Tibial artery (tissue), 4 donors: ENCODE measurements at regions of chr6 and their contacts with region 1.

Region 1: GRCh38 chr6:73285674-73286283 is 22.8 kb upstream of the KHDC1 start:
- DNase-seq: no peak
- H3K4me3 ChIP-seq: no peak overlapping the region
- H3K27ac ChIP-seq: no peak overlapping the region
- H3K4me1 ChIP-seq: peaks cover 0 to 5% (median 0%) of the 10 kb centered on the region in 4 donors
- H3K27me3 ChIP-seq: no peaks in the 10 kb centered on the region
- CTCF ChIP-seq: peak; percentile 41 to 59

Region 2: GRCh38 chr6:73329201-73329600 is 43.4 kb after region 1 on chr6:
- intact Hi-C with region 1: loop called (anchors 5 kb)
- DNase-seq: no peak
- H3K4me3 ChIP-seq: no peak overlapping the region
- H3K27ac ChIP-seq: no peak overlapping the region
- H3K4me1 ChIP-seq: no peaks in the 10 kb centered on the region
- H3K27me3 ChIP-seq: peaks cover 0 to 13% of the 10 kb centered on the region in 2 donors
- CTCF ChIP-seq: no peak

Region 3: GRCh38 chr6:74222768-74223333 is 937.1 kb after region 1 on chr6:
- intact Hi-C with region 1: no loop called
- DNase-seq: no peak
- H3K4me3 ChIP-seq: no peak overlapping the region
- H3K27ac ChIP-seq: no peak overlapping the region
- H3K4me1 ChIP-seq: no peaks in the 10 kb centered on the region
- H3K27me3 ChIP-seq: no peaks in the 10 kb centered on the region
- CTCF ChIP-seq: no peak